A549 (cell line): ENCODE measurements at regions of chr3 and their contacts with region 1.

Region 1: GRCh38 chr3:25427942-25428788 is at the start of gene RARB:
- DNase-seq: peak; percentile 80 to 95
- ATAC-seq: peak; percentile 72
- H3K4me3 ChIP-seq: peak within 1 kb of the TSS; percentile 68
- H3K27ac ChIP-seq: peak within 1 kb of the TSS; percentile 92
- H3K4me1 ChIP-seq: peaks cover 48% of the 10 kb centered on the region
- CTCF ChIP-seq: no peak
- EP300 ChIP-seq: peak in 1 of 2 experiments; percentile 50; a peak in 2 of 5 replicates
- POLR2A ChIP-seq: peak; percentile 95
- RAD21 ChIP-seq: peak; percentile 12 to 31; a peak in 1 of 5 replicates
- polyA plus RNA-seq, gene RARB: 30.8 and 31.9 TPM in 2 replicates

Region 2: GRCh38 chr3:25372167-25372566 is 56.0 kb before region 1 on chr3:
- CTCF ChIA-PET with region 1: no interaction called
- POLR2A ChIA-PET with region 1: no interaction called
- DNase-seq: no peak
- ATAC-seq: no peak
- H3K4me3 ChIP-seq: no peak overlapping the region
- H3K27ac ChIP-seq: no peak overlapping the region
- H3K4me1 ChIP-seq: no peaks in the 10 kb centered on the region
- CTCF ChIP-seq: no peak
- EP300 ChIP-seq: no peak
- POLR2A ChIP-seq: no peak
- RAD21 ChIP-seq: no peak

Region 3: DNA sequence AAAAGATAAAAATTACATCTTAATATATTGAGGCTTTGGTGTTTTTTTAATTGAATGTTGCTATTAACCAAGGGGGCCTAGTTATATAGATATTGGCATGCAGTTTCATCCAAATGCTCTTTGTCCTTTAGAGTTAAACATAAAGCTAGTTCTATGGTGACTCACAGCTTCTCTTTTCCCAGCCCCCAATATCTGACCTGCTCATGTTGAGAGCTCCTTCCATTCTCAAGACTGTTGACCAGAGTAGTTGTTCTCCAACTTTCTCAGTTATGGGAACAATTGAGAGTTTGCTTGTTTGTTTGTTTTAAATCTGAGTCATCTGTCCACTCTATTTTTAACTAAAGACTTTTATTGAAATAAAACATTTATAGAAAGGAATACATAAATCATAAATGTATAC is 15.9 kb before region 1 on chr3:
- CTCF ChIA-PET with region 1: no interaction called
- POLR2A ChIA-PET with region 1: interaction called, 15 read pairs
- DNase-seq: peak in 1 of 2 experiments; percentile 75
- ATAC-seq: peak; percentile 71 to 94; a peak in 4 of 6 replicates
- H3K4me3 ChIP-seq: no peak overlapping the region
- H3K27ac ChIP-seq: peak overlapping the region; percentile 65 to 78
- H3K4me1 ChIP-seq: peaks cover 26% of the 10 kb centered on the region
- CTCF ChIP-seq: no peak
- EP300 ChIP-seq: no peak
- POLR2A ChIP-seq: no peak
- RAD21 ChIP-seq: 0 out of 5 replicates have a peak, but pooled peaks of 1 of the 2 experiments have one; percentile 6

Region 4: GRCh38 chr3:25455441-25456132 is 27.4 kb after region 1 on chr3:
- CTCF ChIA-PET with region 1: no interaction called
- POLR2A ChIA-PET with region 1: interaction called, 12 read pairs
- DNase-seq: no peak
- ATAC-seq: peak; percentile 84 to 86
- H3K4me3 ChIP-seq: no peak overlapping the region
- H3K27ac ChIP-seq: peak overlapping the region; percentile 37 to 65
- H3K4me1 ChIP-seq: peaks cover 67% of the 10 kb centered on the region
- CTCF ChIP-seq: no peak
- EP300 ChIP-seq: no peak
- POLR2A ChIP-seq: no peak
- RAD21 ChIP-seq: no peak

Region 5: DNA sequence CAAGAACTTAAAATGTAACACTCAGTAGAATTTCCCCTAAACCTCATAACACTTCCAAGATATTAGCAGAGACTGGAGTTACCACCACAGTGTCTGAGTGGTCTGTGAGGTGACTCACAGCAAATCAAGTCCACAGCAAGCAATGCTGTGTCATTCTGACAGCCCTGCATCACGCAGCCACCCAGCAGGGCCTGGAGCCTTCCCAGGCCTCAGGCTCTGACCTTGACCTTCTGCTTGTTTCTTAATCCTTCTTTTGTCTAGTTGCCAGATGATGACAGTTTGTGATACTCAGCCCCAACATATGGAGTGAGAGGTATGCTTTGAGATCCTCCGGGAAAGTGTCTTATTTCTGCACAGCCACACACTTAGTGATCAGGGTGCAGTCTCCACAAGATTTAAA is 154.1 kb after region 1 on chr3:
- CTCF ChIA-PET with region 1: interaction called, 4 read pairs
- POLR2A ChIA-PET with region 1: interaction called, 14 read pairs
- DNase-seq: peak; percentile 87 to 95
- ATAC-seq: peak; percentile 98
- H3K4me3 ChIP-seq: no peak overlapping the region
- H3K27ac ChIP-seq: peak overlapping the region; percentile 87 to 97
- H3K4me1 ChIP-seq: peaks cover 47% of the 10 kb centered on the region
- CTCF ChIP-seq: no peak
- EP300 ChIP-seq: peak; percentile 75 to 78; a peak in 3 of 5 replicates
- POLR2A ChIP-seq: no peak
- RAD21 ChIP-seq: peak in 1 of 2 experiments; percentile 45; a peak in 3 of 5 replicates